ENCODE measurements at regions of chr22 and their contacts with region 1.

Region 1: GRCh38 chr22:37538590-37539357 is 19.6 kb upstream of the CARD10 start:
- DNase-seq: peak; percentile 94
- H3K4me3 ChIP-seq: no peak overlapping the region
- H3K27ac ChIP-seq: no peak overlapping the region
- H3K4me1 ChIP-seq: peaks cover 12% of the 10 kb centered on the region
- H3K27me3 ChIP-seq: no peaks in the 10 kb centered on the region
- CTCF ChIP-seq: peak; percentile 98

Region 2: GRCh38 chr22:37561212-37562048 is 22.7 kb after region 1 on chr22:
- CTCF ChIA-PET with region 1: interaction called, 10 read pairs
- POLR2A ChIA-PET with region 1: no interaction called
- intact Hi-C with region 1: no loop called
- DNase-seq: peak; percentile 85
- H3K4me3 ChIP-seq: peak overlapping the region; percentile 47
- H3K27ac ChIP-seq: no peak overlapping the region
- H3K4me1 ChIP-seq: peaks cover 10% of the 10 kb centered on the region
- H3K27me3 ChIP-seq: peaks cover 13% of the 10 kb centered on the region
- CTCF ChIP-seq: peak; percentile 84

Region 3: DNA sequence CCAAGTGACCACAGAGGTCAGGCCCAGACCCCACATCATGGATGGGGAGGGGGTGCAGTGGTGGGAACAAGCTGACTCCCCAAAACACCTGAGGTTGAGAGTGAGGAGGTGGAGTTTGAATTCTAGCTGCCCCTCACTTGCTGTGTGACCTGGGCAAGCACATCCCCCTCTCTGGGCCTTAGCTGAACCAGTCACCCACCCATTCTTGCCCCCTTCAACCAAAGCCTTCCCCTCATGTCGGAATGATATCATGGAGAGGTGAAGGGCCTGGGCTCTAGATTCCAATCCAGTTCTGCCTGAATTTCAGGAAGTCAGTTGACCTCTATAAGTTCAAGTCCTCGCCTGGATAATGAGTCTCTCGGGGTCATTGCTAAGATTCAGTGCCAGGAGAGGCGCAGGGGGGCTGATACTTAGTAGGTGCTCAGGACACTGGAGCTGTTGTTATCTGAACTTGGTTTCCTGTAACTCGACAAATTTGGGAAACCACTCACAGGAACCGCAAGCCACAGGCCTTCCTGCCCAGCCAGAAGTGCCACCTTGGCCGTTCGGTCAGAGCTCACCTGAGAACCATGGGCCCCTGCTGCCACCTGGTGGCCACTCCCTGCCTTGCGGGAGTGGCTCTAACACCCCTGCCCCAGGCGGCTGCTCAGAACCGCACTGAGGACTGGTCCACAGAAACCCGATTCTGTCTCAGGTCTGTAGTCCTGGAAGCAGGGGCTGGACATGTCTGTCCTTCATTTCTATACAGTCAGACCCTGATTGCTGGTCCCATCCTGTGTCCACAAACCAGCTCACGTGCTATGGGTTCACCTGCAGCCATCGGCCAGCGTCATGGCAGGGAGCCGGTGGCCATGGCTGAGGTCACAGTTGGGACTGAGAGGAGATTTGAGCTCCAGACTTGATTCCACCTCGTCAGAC is 28.4 kb after region 1 on chr22:
- CTCF ChIA-PET with region 1: interaction called, 21 read pairs
- POLR2A ChIA-PET with region 1: no interaction called
- intact Hi-C with region 1: loop called (anchors 1 kb)
- DNase-seq: peak; percentile 67
- H3K4me3 ChIP-seq: no peak overlapping the region
- H3K27ac ChIP-seq: no peak overlapping the region
- H3K4me1 ChIP-seq: no peaks in the 10 kb centered on the region
- H3K27me3 ChIP-seq: no peaks in the 10 kb centered on the region
- CTCF ChIP-seq: peak; percentile 97

Region 4: DNA sequence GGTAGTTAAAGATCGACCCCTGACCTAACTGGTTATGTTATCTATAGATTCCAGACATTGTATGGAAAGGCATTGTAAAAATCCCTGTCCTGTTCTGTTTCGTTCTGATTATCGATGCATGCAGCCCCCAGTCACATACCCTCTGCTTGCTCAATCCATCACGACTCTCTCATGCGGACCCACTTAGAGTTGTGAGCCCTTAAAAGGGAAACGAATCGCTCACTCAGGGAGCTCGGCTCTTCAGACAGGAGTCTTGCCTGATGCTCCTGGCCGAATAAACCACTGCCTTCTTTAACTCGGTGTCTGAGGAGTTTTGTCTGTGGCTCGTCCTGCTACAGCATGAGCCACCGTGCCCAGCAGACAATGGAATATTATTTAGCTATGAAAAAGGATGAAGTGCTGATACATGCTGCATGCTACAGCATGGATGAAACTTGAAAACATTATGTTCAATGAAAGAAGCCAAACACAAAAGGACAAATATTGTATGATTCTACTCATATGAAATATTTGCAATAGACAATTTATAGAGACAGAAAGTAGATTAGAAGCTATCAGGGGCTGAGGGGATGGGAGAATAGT is 53.1 kb after region 1 on chr22:
- CTCF ChIA-PET with region 1: interaction called, 6 read pairs
- POLR2A ChIA-PET with region 1: no interaction called
- intact Hi-C with region 1: loop called (anchors 1 kb)
- DNase-seq: no peak
- H3K4me3 ChIP-seq: peak overlapping the region; percentile 22
- H3K27ac ChIP-seq: no peak overlapping the region
- H3K4me1 ChIP-seq: no peaks in the 10 kb centered on the region
- H3K27me3 ChIP-seq: no peaks in the 10 kb centered on the region
- CTCF ChIP-seq: no peak

Region 5: DNA sequence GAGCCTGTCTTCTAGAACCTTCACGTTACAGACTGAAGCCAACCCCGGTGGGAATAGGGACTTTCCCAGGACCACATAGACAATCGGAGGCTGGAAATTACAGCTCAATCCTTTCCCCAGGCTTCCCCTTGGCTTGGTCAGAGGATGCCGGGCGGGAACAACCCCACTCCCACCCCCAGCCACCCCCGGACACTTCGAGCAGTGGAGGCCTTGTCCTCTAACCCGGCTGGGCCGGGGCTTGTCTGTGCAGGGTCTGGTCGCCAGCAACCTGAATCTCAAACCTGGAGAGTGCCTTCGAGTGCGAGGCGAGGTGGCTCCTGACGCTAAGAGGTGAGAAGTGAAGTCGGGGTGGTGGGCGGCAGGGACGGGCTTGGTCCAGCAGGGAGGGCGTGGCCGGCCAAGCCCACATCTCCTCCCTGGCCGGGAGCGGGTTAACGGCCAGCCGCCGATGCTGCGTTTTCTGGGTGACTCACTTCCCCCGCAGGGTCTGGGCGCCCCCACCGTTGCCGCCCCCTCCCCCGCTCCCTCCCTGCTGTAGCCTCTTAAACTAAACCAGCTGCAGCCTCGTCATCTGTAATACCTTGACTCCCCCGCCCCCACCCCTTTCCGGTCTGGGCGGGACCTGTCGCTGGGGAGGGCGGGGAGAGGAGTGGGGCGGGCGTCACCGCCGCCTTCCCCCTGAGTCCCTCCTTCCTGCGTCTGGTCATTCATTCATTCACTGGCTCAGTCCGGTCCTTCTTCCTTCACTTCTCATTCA is 138.1 kb after region 1 on chr22:
- CTCF ChIA-PET with region 1: no interaction called
- POLR2A ChIA-PET with region 1: interaction called, 3 read pairs
- intact Hi-C with region 1: loop called (anchors 5 kb)
- DNase-seq: peak; percentile 95
- H3K4me3 ChIP-seq: peak overlapping the region; percentile 59
- H3K27ac ChIP-seq: peak overlapping the region; percentile 92
- H3K4me1 ChIP-seq: peaks cover 24% of the 10 kb centered on the region
- H3K27me3 ChIP-seq: no peaks in the 10 kb centered on the region
- CTCF ChIP-seq: no peak

Region 6: DNA sequence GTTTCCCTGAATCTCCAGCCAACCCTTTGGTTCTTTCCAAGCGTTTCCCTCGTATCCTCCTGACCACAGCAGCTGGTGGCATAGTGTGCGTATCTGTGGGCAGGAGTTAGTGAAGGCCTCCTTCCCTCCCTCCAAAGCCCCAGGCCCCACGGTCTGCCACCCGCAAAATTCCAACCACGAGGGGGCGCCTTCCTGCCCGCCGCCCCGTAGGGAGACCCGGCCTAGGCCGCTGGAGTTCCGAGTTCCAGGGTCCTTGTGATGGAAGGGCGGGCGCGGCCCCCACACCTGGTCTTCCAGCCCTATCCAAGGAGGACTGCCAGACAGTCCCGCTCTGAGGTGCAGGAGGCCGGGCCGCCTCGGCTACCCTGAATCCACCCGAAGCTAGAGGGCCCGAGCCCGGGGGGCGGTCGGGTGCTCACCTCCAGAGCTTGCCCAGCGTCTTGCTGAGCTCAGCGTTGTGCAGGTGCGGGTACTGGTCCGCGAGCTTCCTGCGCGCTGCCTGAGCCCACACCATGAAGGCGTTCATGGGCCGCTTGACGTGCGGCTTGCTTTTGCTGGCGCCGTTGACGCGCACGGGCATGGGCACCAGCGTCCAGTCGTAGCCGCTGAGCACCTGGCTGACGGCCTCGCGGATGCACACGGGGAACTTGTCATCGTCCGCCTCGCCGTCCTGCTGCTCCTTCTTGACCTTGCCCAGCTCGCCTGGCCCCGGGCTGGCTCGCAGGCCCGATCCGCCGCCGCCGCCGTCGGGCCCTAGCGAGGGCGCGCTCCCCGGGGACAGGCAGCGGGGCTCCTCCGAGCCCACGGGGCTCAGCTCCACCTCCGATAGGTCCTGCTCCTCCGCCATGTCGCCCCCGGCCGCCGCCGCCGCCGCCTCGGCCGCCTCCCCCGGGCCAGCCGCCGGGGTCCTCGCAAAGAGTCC is 444.4 kb after region 1 on chr22:
- CTCF ChIA-PET with region 1: no interaction called
- POLR2A ChIA-PET with region 1: no interaction called
- intact Hi-C with region 1: no loop called
- DNase-seq: no peak
- H3K4me3 ChIP-seq: no peak overlapping the region
- H3K27ac ChIP-seq: no peak overlapping the region
- H3K4me1 ChIP-seq: no peaks in the 10 kb centered on the region
- H3K27me3 ChIP-seq: no peaks in the 10 kb centered on the region
- CTCF ChIP-seq: peak; percentile 37

Measured in A673 (cell line).